Left ventricle myocardium superior (tissue), 1 donor: ENCODE measurements at regions of chr21 and their contacts with region 1.

Region 1: DNA sequence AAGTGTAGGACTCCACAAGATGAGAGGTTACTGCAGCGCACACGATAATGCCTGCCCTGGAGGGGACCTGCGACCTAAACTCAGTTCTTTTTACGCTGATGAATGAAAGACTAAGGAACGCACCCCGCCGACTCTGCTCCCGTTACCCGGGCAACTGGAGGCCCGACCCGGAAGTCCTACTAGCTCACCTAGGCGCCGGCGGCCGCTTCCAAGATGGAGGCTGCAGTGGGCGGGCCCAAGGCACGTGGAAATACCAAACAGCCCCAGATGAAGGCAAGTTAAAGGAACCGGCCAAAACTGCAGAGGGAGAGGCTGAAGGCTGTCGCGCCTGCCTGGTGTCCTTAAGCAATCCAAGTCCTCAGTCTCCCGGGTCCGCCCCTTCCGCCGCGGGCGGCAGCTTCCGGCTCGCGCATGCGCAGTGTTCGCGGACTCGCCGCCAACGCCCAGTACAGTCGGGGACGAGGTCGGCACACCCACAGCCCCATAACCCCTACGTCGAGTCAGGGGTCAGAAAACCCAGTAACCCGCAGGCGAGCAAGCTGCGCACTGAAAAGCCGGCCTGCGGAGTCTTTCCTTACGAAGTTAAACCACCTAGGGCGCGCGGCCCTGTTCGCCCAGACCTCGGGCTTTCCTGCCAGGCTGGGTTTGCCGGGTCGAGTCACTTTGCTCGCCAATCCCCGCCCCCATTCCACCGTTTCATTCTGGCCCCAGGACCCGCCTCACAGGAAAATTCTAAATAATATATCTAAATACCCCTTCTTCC is at the start of gene SETD4:
- DNase-seq: peak; percentile 96
- ATAC-seq: peak; percentile 97
- total RNA-seq, gene SETD4: 10.3 TPM

Region 2: DNA sequence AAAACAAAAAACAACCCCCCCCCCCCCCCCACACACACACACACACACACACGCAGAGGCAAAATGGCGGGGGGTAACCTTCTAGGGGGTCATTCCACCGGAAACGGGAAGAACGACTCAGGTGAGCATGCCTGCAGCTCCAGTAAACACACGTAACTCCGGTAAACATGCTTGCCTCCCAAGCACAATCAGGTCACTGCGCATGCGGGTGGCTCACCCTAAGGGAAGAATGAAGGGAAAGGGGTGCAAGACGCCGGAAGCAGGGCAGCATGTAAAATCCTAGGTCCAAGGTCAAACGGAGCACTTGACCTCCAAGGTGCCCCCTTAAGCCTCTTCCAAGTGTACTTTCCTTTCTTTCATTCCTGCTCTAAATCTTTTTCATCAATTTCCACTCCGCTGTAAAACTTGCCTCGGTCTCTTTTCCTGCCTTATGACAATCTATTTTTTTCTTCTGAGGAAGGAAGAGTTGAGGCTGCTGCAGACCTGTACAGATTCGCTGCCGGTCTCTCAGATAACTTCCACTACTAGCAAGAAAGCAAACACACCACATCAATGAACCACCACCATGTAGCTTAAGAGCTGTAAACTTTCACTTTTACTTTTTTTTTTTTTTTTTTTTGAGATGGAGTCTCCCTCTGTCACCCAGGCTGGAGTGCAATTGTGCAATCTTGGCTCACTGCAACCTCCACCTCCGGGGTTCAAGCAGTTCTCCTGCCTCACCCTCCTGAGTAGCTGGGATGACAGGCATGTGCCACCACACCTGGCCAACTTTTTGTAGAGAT is 53.5 kb after region 1 on chr21:
- intact Hi-C with region 1: loop called (anchors 10 kb)
- DNase-seq: no peak
- ATAC-seq: peak; percentile 40